MCF 10A (cell line): ENCODE measurements at regions of chrX and their contacts with region 1.

Region 1: GRCh38 chrX:120801426-120801825 is 74.2 kb downstream of the CT47B1 start:
- DNase-seq: no peak
- H3K4me3 Mint-ChIP-seq: no peak overlapping the region
- H3K27ac Mint-ChIP-seq: no peak overlapping the region
- H3K4me1 Mint-ChIP-seq: no peaks in the 10 kb centered on the region
- H3K27me3 Mint-ChIP-seq: no peaks in the 10 kb centered on the region
- CTCF ChIP-seq: no peak

Region 2: GRCh38 chrX:120790118-120790517 is 11.3 kb before region 1 on chrX:
- CTCF ChIA-PET with region 1: interaction called, 17 read pairs
- POLR2A ChIA-PET with region 1: no interaction called
- intact Hi-C with region 1: no loop called
- DNase-seq: peak; percentile 82
- H3K4me3 Mint-ChIP-seq: no peak overlapping the region
- H3K27ac Mint-ChIP-seq: no peak overlapping the region
- H3K4me1 Mint-ChIP-seq: peaks cover 20% of the 10 kb centered on the region
- H3K27me3 Mint-ChIP-seq: no peaks in the 10 kb centered on the region
- CTCF ChIP-seq: peak; percentile 71